SK-MEL-5 (cell line): ENCODE measurements at regions of chr6 and their contacts with region 1.

Region 1: GRCh38 chr6:18047406-18047805 is 60.0 kb upstream of the KIF13A start:
- DNase-seq: no peak

Region 2: GRCh38 chr6:18221288-18221615 is 173.8 kb after region 1 on chr6:
- in situ Hi-C with region 1: loop called (anchors 10 kb)
- DNase-seq: no peak

Region 3: GRCh38 chr6:18343741-18344140 is 296.3 kb after region 1 on chr6:
- in situ Hi-C with region 1: no loop called
- DNase-seq: no peak